CD8-positive, alpha-beta T cell (primary cell): ENCODE measurements at regions of chr7 and their contacts with region 1.

Region 1: GRCh38 chr7:129271500-129272355 is 46.9 kb downstream of the AHCYL2 start:
- DNase-seq: peak; percentile 35 to 86 (median 67)
- ATAC-seq: peak; percentile 100
- H3K4me3 ChIP-seq: no peak overlapping the region
- H3K4me3 Mint-ChIP-seq: peak overlapping the region; percentile 72
- H3K27ac ChIP-seq: no peak overlapping the region
- H3K27ac Mint-ChIP-seq: no peak overlapping the region
- H3K4me1 ChIP-seq: no peaks in the 10 kb centered on the region
- H3K4me1 Mint-ChIP-seq: peaks cover 6% of the 10 kb centered on the region
- H3K27me3 ChIP-seq: no peaks in the 10 kb centered on the region
- H3K27me3 Mint-ChIP-seq: no peaks in the 10 kb centered on the region
- CTCF ChIP-seq: peak; percentile 78

Region 2: GRCh38 chr7:128811631-128812430 is 459.9 kb before region 1 on chr7:
- CTCF ChIA-PET with region 1: no interaction called
- POLR2A ChIA-PET with region 1: no interaction called
- intact Hi-C with region 1: no loop called
- DNase-seq: no peak
- ATAC-seq: no peak
- H3K4me3 ChIP-seq: no peak overlapping the region
- H3K4me3 Mint-ChIP-seq: no peak overlapping the region
- H3K27ac ChIP-seq: no peak overlapping the region
- H3K27ac Mint-ChIP-seq: no peak overlapping the region
- H3K4me1 ChIP-seq: no peaks in the 10 kb centered on the region
- H3K4me1 Mint-ChIP-seq: no peaks in the 10 kb centered on the region
- H3K27me3 ChIP-seq: no peaks in the 10 kb centered on the region
- H3K27me3 Mint-ChIP-seq: no peaks in the 10 kb centered on the region
- CTCF ChIP-seq: no peak

Region 3: DNA sequence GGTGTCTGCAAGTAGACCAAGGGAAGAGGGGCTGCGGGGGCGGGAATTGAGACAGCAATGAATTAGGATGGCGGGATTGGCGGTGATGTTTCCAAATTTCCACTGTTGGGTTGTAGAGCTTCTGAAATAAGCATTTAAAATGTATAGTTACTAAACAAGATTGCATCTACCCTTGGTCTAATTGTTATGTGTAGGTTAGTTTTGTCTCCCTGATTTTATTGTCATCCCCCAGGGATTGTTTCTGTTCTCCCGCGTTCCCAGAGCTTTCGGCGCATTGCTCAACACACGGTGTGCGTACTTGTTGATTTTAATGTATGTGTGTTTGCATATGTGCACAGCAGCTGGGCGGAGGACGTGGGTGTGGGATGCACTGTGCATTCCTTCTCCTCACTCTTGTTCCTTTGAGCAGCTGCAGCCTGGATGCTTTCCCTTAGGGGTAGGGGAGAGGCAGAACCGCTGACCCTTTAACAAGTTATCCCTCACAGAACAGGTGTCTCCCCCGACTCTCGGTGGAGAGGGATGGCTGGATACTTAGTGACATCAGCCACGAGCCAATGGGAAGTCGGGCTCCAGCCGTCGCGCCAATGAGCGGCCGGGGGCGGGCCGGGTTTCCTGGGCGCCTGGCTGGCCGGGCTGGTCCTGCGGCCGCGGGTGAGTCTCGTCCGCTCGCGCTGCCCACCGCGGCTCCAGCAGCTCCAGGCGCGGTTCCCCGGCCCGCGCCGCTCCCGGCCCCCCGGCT is 127.5 kb before region 1 on chr7 and contains the start of gene TSPAN33:
- CTCF ChIA-PET with region 1: no interaction called
- POLR2A ChIA-PET with region 1: no interaction called
- intact Hi-C with region 1: no loop called
- DNase-seq: peak in 8 of 9 experiments; percentile 47 to 74 (median 60)
- ATAC-seq: peak; percentile 89
- H3K4me3 ChIP-seq: peak within 1 kb of the TSS; percentile 57 to 83
- H3K4me3 Mint-ChIP-seq: peak within 1 kb of the TSS; percentile 96
- H3K27ac ChIP-seq: no peak within 1 kb of the TSS
- H3K27ac Mint-ChIP-seq: peak within 1 kb of the TSS; percentile 76
- H3K4me1 ChIP-seq: peaks cover 16% of the 10 kb centered on the region
- H3K4me1 Mint-ChIP-seq: peaks cover 23% of the 10 kb centered on the region
- H3K27me3 ChIP-seq: peaks cover 0 to 4% of the 10 kb centered on the region in 2 experiments
- H3K27me3 Mint-ChIP-seq: peaks cover 9% of the 10 kb centered on the region
- CTCF ChIP-seq: no peak
- total RNA-seq, gene TSPAN33: 4.7 to 5.6 TPM

Region 4: DNA sequence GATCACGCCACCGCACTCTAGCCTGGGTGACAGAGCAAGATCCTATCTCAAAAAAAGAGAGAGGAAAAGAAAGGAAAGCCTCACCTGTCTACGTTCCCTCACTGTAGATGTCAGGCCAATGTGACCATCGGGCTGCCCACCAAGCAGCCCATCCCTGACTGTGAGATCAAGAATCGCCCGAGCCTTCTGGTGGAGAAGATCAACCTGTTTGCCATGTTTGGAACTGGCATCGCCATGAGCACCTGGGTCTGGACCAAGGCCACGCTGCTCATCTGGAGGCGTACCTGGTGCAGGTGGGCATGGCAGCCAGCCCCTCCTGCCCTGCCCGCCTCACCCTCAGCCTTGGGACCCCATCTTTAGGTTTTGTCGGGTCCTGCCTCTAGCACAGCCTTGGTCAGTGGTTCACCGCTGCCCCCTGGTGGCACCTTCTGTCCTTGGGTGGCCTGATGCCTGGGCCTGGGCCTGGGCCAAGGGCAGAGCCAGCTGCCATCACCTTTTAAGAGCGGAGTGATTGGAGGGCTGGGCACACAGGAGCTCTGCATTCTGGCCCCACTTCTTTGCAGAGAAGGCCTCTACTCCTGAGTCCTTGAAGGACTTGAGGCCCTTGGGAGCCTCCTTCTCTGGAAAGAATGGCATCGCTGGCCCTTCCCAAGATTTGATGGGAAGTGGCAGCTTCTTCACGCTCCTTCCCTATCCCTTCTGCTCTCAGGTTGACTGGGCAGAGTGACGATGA is 61.3 kb before region 1 on chr7:
- CTCF ChIA-PET with region 1: interaction called, 21 read pairs
- POLR2A ChIA-PET with region 1: no interaction called
- intact Hi-C with region 1: no loop called
- DNase-seq: peak; percentile 39 to 78 (median 64)
- ATAC-seq: peak; percentile 69
- H3K4me3 ChIP-seq: no peak overlapping the region
- H3K4me3 Mint-ChIP-seq: no peak overlapping the region
- H3K27ac ChIP-seq: no peak overlapping the region
- H3K27ac Mint-ChIP-seq: no peak overlapping the region
- H3K4me1 ChIP-seq: no peaks in the 10 kb centered on the region
- H3K4me1 Mint-ChIP-seq: peaks cover 3% of the 10 kb centered on the region
- H3K27me3 ChIP-seq: no peaks in the 10 kb centered on the region
- H3K27me3 Mint-ChIP-seq: peaks cover 4% of the 10 kb centered on the region
- CTCF ChIP-seq: peak; percentile 45

Region 5: GRCh38 chr7:129258649-129259389 is 12.9 kb before region 1 on chr7:
- CTCF ChIA-PET with region 1: interaction called, 35 read pairs
- POLR2A ChIA-PET with region 1: interaction called, 3 read pairs
- intact Hi-C with region 1: no loop called
- DNase-seq: peak in 1 of 9 experiments; percentile 19
- ATAC-seq: no peak
- H3K4me3 ChIP-seq: no peak overlapping the region
- H3K4me3 Mint-ChIP-seq: peak overlapping the region; percentile 70
- H3K27ac ChIP-seq: no peak overlapping the region
- H3K27ac Mint-ChIP-seq: no peak overlapping the region
- H3K4me1 ChIP-seq: peaks cover 10% of the 10 kb centered on the region
- H3K4me1 Mint-ChIP-seq: peaks cover 33% of the 10 kb centered on the region
- H3K27me3 ChIP-seq: no peaks in the 10 kb centered on the region
- H3K27me3 Mint-ChIP-seq: no peaks in the 10 kb centered on the region
- CTCF ChIP-seq: no peak

Region 6: GRCh38 chr7:129298268-129298893 is 26.7 kb after region 1 on chr7:
- CTCF ChIA-PET with region 1: interaction called, 19 read pairs
- POLR2A ChIA-PET with region 1: no interaction called
- intact Hi-C with region 1: loop called in 1 of 2 experiments (anchors 2 kb)
- DNase-seq: peak in 8 of 9 experiments; percentile 19 to 63 (median 54)
- ATAC-seq: no peak
- H3K4me3 ChIP-seq: no peak overlapping the region
- H3K4me3 Mint-ChIP-seq: no peak overlapping the region
- H3K27ac ChIP-seq: no peak overlapping the region
- H3K27ac Mint-ChIP-seq: no peak overlapping the region
- H3K4me1 ChIP-seq: no peaks in the 10 kb centered on the region
- H3K4me1 Mint-ChIP-seq: no peaks in the 10 kb centered on the region
- H3K27me3 ChIP-seq: no peaks in the 10 kb centered on the region
- H3K27me3 Mint-ChIP-seq: no peaks in the 10 kb centered on the region
- CTCF ChIP-seq: peak; percentile 70

Region 7: GRCh38 chr7:129315960-129316359 is 44.2 kb after region 1 on chr7:
- CTCF ChIA-PET with region 1: no interaction called
- POLR2A ChIA-PET with region 1: no interaction called
- intact Hi-C with region 1: no loop called
- DNase-seq: no peak
- ATAC-seq: no peak
- H3K4me3 ChIP-seq: no peak overlapping the region
- H3K4me3 Mint-ChIP-seq: no peak overlapping the region
- H3K27ac ChIP-seq: no peak overlapping the region
- H3K27ac Mint-ChIP-seq: no peak overlapping the region
- H3K4me1 ChIP-seq: no peaks in the 10 kb centered on the region
- H3K4me1 Mint-ChIP-seq: no peaks in the 10 kb centered on the region
- H3K27me3 ChIP-seq: no peaks in the 10 kb centered on the region
- H3K27me3 Mint-ChIP-seq: no peaks in the 10 kb centered on the region
- CTCF ChIP-seq: no peak